Mammary epithelial cell (primary cell): ENCODE measurements at regions of chr6 and their contacts with region 1.

Region 1: DNA sequence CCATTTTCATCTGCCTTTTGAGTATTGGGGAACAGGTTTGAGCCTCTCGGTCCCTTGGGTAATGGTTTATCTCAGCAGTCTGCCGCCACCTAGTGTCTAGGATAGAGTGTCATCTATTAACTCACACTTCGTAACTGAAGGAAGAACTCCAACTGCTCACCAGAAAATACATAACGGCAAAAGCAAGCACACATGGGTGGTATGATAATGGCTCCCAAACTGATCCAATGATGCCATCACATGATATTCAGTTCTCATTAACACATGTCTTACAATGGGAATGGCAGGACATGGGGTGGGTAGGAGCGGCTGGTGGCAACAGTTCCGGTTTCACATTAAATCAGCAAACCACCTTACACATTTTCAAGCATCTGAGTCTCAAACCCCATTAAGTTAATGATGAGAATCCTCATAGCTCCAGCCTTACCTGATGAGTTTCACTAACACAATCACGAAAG is 110.7 kb upstream of the PHACTR1 start:
- DNase-seq: peak; percentile 61
- H3K4me3 ChIP-seq: no peak overlapping the region
- H3K27ac ChIP-seq: no peak overlapping the region
- H3K4me1 ChIP-seq: peaks cover 5% of the 10 kb centered on the region
- H3K27me3 ChIP-seq: no peaks in the 10 kb centered on the region
- CTCF ChIP-seq: peak; percentile 74 to 77

Region 2: DNA sequence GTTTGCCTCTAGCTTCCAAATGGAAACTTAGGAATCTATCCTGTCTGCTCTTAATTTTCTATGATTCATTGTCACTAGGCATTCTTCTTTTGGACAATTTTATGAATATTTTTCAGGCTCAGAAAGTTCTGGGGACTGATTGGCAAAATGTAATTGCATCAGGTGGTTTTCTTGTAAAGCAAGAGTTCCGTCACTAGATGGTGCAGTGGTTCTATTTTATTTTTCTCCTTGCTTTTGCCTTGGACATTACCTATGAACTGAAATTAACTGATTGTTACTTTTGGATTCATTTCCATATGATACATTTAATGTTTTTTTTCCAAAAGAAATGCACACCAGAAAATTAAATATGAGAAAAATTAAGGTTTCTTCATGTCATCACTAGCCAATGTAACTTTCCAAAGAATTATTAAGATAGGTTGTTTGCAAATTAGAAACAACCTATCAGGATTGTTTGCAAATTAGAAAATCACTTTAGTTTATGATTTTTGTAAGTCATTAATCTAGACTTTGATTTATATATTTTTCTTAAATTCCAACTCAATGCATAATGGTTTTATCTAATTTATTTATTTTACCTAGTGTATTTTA is 1020.4 kb before region 1 on chr6:
- CTCF ChIA-PET with region 1: no interaction called
- dilution Hi-C with region 1: no loop called
- in situ Hi-C with region 1: loop called in 1 of 2 experiments (anchors 10 kb)
- intact Hi-C with region 1: loop called (anchors 1 kb)
- DNase-seq: peak; percentile 31
- H3K4me3 ChIP-seq: no peak overlapping the region
- H3K27ac ChIP-seq: no peak overlapping the region
- H3K4me1 ChIP-seq: no peaks in the 10 kb centered on the region
- H3K27me3 ChIP-seq: peaks cover 3% of the 10 kb centered on the region
- CTCF ChIP-seq: peak; percentile 64 to 66

Region 3: DNA sequence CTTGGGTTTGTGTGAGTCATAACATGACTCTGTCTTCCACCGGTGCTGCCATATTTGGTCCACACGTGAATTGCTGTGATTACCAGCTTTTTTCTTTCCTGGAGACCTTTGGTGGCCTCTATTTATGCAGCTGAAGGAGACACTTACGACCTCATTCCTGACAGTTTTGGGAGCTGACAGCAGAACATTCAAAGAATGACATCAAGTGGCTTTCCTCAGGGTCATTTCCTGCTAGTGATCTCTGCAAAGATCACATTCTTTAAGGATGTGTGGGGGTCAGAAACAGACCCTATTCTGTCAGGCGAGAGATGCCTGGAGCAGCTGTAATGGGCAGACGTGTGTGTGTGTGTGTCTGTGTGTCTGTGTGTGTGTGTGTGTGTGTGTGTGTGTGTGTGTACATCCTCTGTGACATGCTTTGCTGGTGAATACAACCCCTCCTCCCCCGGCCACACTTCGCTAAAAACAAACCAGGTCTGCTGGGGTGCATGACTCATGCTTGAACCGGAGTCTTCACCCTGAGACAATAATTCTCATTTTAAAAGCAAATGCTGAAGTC is 952.8 kb before region 1 on chr6:
- CTCF ChIA-PET with region 1: no interaction called
- dilution Hi-C with region 1: no loop called
- in situ Hi-C with region 1: loop called in 1 of 2 experiments (anchors 25 kb)
- intact Hi-C with region 1: loop called (anchors 2 kb)
- DNase-seq: peak; percentile 60
- H3K4me3 ChIP-seq: no peak overlapping the region
- H3K27ac ChIP-seq: no peak overlapping the region
- H3K4me1 ChIP-seq: peaks cover 8% of the 10 kb centered on the region
- H3K27me3 ChIP-seq: no peaks in the 10 kb centered on the region
- CTCF ChIP-seq: no peak

Region 4: GRCh38 chr6:12233693-12234571 is 372.0 kb before region 1 on chr6:
- CTCF ChIA-PET with region 1: no interaction called
- dilution Hi-C with region 1: no loop called
- in situ Hi-C with region 1: no loop called
- intact Hi-C with region 1: loop called (anchors 1 kb)
- DNase-seq: peak; percentile 82
- H3K4me3 ChIP-seq: no peak overlapping the region
- H3K27ac ChIP-seq: no peak overlapping the region
- H3K4me1 ChIP-seq: peaks cover 5% of the 10 kb centered on the region
- H3K27me3 ChIP-seq: no peaks in the 10 kb centered on the region
- CTCF ChIP-seq: peak; percentile 74 to 84

Region 5: DNA sequence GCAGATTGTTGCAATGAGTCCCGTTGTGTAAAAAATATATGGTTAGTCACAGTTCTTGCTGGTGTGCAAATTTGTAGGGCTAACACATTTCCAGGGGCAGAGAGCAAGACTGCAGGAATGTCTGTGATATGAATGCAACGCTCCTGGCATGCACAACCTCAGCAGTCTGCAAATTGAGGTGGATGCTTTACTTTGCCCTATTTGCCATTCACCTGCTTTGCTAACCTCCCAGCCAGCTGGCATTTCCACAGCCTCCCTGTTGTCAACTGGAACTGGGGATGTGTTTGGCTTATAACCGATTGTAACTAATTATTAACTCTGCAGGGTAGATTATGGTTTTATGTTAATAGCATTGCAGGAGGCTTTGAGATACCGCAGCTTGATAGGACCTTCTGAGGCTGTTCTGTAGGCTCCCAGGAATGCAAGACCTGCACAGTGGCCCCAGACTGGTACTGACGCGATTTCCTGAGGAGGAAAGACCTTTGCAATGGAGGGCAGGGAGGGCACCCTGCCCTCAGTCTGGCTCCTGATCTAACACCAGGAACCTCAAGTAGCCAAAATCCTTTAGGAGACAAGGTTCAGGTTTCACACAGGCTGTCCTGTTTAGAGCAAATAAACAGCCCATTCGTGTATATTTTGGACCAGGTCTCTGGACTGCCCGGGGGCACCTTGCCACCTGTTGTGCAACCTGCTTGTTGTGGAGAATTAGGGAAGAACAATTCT is 262.3 kb before region 1 on chr6:
- CTCF ChIA-PET with region 1: no interaction called
- dilution Hi-C with region 1: no loop called
- in situ Hi-C with region 1: no loop called
- intact Hi-C with region 1: no loop called
- DNase-seq: no peak
- H3K4me3 ChIP-seq: no peak overlapping the region
- H3K27ac ChIP-seq: no peak overlapping the region
- H3K4me1 ChIP-seq: peaks cover 5% of the 10 kb centered on the region
- H3K27me3 ChIP-seq: no peaks in the 10 kb centered on the region
- CTCF ChIP-seq: no peak

Region 6: GRCh38 chr6:12372340-12372739 is 233.6 kb before region 1 on chr6:
- CTCF ChIA-PET with region 1: no interaction called
- dilution Hi-C with region 1: no loop called
- in situ Hi-C with region 1: no loop called
- intact Hi-C with region 1: no loop called
- DNase-seq: no peak
- H3K4me3 ChIP-seq: no peak overlapping the region
- H3K27ac ChIP-seq: no peak overlapping the region
- H3K4me1 ChIP-seq: peaks cover 12% of the 10 kb centered on the region
- H3K27me3 ChIP-seq: no peaks in the 10 kb centered on the region
- CTCF ChIP-seq: no peak

Region 7: GRCh38 chr6:12395898-12396297 is 210.0 kb before region 1 on chr6:
- CTCF ChIA-PET with region 1: no interaction called
- dilution Hi-C with region 1: no loop called
- in situ Hi-C with region 1: loop called in 1 of 2 experiments (anchors 10 kb)
- intact Hi-C with region 1: loop called (anchors 1 kb)
- DNase-seq: no peak
- H3K4me3 ChIP-seq: no peak overlapping the region
- H3K27ac ChIP-seq: no peak overlapping the region
- H3K4me1 ChIP-seq: no peaks in the 10 kb centered on the region
- H3K27me3 ChIP-seq: no peaks in the 10 kb centered on the region
- CTCF ChIP-seq: peak in 1 of 2 donors; percentile 43

Region 8: DNA sequence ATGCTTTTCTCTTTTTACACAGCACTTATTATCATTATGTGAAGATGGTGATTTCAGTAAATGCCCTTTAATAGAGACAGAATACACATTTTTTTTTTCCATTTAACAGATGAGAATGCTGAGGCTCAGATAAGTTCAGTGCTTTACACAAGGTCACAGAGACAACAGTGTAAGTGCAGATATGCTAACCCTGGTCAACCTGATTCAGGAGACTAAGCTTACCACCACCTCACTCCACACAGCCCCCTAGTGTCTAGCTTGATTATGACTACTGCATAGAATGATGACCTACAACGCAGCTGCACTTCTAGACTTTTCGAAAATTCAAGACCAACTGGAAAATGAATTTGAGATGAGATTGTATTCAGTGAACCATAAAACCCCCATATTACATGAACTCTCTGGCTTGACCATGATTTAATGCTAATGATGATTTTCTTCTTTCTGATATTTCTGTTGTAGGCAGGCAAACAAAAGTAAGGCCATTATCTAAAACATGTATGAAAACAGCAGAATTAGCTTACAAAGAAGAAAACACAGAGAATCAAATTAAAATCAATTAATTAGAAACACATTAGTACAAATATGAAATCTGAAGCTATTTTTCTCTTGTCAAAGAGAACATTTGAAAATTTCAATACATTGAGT is 101.5 kb before region 1 on chr6:
- CTCF ChIA-PET with region 1: interaction called, 5 read pairs
- dilution Hi-C with region 1: no loop called
- in situ Hi-C with region 1: no loop called
- intact Hi-C with region 1: loop called (anchors 1 kb)
- DNase-seq: peak; percentile 25
- H3K4me3 ChIP-seq: no peak overlapping the region
- H3K27ac ChIP-seq: no peak overlapping the region
- H3K4me1 ChIP-seq: peaks cover 10% of the 10 kb centered on the region
- H3K27me3 ChIP-seq: no peaks in the 10 kb centered on the region
- CTCF ChIP-seq: peak; percentile 54 to 81

Region 9: GRCh38 chr6:12698298-12698697 is 92.4 kb after region 1 on chr6:
- CTCF ChIA-PET with region 1: no interaction called
- dilution Hi-C with region 1: no loop called
- in situ Hi-C with region 1: no loop called
- intact Hi-C with region 1: no loop called
- DNase-seq: no peak
- H3K4me3 ChIP-seq: no peak overlapping the region
- H3K27ac ChIP-seq: no peak overlapping the region
- H3K4me1 ChIP-seq: no peaks in the 10 kb centered on the region
- H3K27me3 ChIP-seq: peaks cover 3% of the 10 kb centered on the region
- CTCF ChIP-seq: no peak

Region 10: DNA sequence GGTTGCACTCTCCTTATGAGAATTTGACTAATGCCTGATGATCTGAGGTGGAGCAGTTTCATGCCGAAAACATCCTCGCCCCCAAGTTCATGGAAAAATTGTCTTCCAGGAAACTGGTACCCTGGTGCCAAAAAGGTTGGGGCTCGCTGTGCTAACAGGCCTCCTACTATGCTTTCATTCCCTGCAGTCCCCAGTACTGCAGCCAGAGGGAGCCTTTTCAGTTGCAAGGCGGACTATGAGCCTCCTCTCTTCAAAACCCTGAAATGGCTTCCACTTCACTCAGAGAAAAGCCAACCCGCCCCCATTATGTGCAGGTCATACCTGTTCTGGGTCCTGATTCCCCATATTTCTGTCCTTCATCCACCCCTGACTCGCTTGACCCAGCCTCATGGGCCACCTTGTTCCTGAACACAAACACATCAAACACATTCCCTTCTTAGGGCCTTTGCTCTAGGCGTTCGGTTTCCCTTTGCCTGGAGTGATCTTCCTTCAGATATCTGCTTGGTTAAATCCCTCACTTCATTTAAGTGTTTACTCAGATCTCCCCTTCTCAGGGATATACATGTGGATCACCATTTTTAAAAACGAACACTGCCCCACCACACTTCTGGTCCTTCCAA is 284.4 kb after region 1 on chr6:
- CTCF ChIA-PET with region 1: no interaction called
- dilution Hi-C with region 1: no loop called
- in situ Hi-C with region 1: no loop called
- intact Hi-C with region 1: loop called (anchors 1 kb)
- DNase-seq: no peak
- H3K4me3 ChIP-seq: no peak overlapping the region
- H3K27ac ChIP-seq: no peak overlapping the region
- H3K4me1 ChIP-seq: no peaks in the 10 kb centered on the region
- H3K27me3 ChIP-seq: no peaks in the 10 kb centered on the region
- CTCF ChIP-seq: peak; percentile 53 to 59